Activated CD4-positive, alpha-beta T cell treated with anti-CD3 and anti-CD28 coated beads, Interleukin-2, amount 10 ng/mL, durations not matched to agents 24 days and 14 days (primary cell): ENCODE measurements at regions of chr6 and their contacts with region 1.

Region 1: DNA sequence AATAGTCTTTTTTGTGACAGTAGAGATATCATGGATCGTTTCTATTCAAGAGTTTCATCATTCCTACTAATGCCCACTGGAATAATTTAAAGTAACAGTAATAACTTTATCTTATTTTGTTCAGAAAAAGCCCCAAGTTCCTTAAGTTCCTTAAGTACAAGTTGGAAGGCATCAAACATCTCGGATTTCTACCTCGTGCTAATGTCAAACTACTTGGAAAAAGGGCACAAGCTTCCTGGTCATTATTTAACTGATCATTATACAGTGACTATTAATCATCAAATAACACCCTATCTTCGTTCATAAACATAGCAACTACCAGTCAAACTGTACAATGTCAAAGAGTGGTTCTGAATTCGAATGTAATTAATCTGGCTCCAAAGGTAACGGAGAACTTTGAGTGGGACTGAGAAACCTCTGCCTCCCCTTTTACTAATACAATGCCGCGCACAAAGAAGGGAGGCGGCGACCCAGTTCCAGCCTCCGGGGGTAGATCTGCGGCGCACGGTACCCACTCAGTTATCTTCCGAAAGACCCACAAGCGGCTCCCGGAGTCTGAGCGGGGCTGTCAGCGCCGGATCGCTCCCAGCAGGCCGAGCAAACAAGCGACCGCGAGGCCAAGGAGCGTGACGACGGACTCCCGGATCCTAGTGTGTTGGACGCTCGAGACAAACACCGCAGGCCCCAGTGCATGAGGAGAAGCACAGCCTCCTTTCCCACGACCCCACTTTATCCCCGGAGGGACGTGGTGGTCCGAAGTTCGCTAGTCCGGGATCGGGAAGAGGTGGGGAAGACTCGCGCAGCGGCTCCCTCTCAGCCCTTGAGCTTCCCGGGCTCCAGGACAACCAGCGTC is 716 bp downstream of the SHPRH start:
- DNase-seq: peak; percentile 81
- H3K4me3 Mint-ChIP-seq: peak overlapping the region; percentile 99
- H3K27ac Mint-ChIP-seq: peak overlapping the region; percentile 95
- H3K4me1 Mint-ChIP-seq: peaks cover 30% of the 10 kb centered on the region
- H3K27me3 Mint-ChIP-seq: no peaks in the 10 kb centered on the region

Region 2: DNA sequence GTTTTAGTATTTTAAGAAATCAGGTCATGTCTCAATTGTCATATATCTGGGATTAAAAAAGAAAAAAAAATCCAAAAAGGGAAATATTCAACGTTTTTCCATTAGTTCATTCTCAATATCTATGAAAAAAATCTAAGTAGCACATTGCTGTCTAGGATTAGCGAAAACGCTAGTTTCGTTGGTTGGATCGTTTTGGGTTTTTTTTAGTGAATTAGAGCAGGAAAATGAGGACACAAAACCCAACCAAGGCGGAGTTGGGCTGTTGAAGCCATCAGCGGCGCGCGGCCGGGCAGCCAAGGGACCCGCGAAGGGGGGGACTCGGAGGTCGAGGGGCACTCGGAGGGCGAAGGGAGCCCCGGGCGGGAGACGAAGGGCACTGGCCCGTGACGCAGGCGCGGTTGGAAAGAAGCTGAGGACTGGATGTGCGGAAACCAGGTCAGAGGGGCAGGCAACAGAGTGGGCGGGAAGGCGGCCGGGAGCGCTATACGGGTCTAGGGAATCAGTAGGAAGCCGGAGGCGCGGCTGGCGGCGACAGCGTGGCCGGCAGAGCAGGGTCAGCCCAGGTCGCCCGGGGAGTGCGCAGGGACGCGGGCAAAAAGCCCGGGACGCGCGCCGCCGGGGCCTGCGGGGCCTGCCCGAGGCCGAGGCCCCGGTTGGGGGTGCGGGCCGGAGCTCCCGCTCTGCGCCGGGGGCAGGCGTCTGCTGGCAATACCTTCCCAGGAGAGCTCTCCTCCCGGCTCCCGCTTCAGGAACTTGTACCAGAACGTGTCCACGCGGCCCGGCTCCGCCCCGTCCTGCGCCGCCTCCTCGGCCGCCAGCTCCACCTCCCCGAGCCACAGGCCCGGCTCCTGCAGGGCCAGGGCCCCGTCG is 228.7 kb before region 1 on chr6:
- intact Hi-C with region 1: loop called (anchors 1 kb)
- DNase-seq: peak; percentile 91
- H3K4me3 Mint-ChIP-seq: peak overlapping the region; percentile 92
- H3K27ac Mint-ChIP-seq: peak overlapping the region; percentile 98
- H3K4me1 Mint-ChIP-seq: peaks cover 14% of the 10 kb centered on the region
- H3K27me3 Mint-ChIP-seq: no peaks in the 10 kb centered on the region

Region 3: GRCh38 chr6:145814501-145815308 is 148.7 kb before region 1 on chr6 and contains the start of gene FBXO30:
- intact Hi-C with region 1: loop called (anchors 1 kb)
- DNase-seq: peak; percentile 97
- H3K4me3 Mint-ChIP-seq: peak within 1 kb of the TSS; percentile 90
- H3K27ac Mint-ChIP-seq: peak within 1 kb of the TSS; percentile 90
- H3K4me1 Mint-ChIP-seq: peaks cover 29% of the 10 kb centered on the region
- H3K27me3 Mint-ChIP-seq: no peaks in the 10 kb centered on the region
- total RNA-seq, gene FBXO30: 6.3 and 6.6 TPM in 2 replicates

Region 4: GRCh38 chr6:147202516-147203312 is 1239.3 kb after region 1 on chr6:
- intact Hi-C with region 1: loop called (anchors 2 kb)
- DNase-seq: peak; percentile 95
- H3K4me3 Mint-ChIP-seq: peak overlapping the region; percentile 98
- H3K27ac Mint-ChIP-seq: peak overlapping the region; percentile 93
- H3K4me1 Mint-ChIP-seq: peaks cover 32% of the 10 kb centered on the region
- H3K27me3 Mint-ChIP-seq: no peaks in the 10 kb centered on the region